ENCODE measurements at regions of chr1 and their contacts with region 1.

Region 1: DNA sequence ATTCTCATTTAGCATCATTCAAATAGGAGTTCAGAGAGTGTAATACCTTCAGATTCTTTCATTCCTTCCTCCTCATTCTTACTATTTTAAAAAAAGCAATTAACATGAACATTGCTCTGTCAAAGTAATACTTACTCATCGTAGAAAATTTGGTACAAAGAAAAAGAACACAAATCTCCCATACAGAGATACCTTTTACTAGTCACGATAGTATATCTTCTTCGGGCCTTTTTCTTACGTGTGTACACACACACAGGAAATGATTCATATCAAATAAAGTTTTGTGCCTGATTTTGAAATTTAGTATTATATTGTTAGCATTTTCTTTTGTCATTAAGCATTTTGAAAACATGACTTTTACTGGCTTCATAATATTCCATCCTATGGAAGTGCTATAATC is 52.9 kb downstream of the NCF2 start:
- DNase-seq: no peak
- ATAC-seq: no peak
- H3K4me3 ChIP-seq: no peak overlapping the region
- H3K27ac ChIP-seq: no peak overlapping the region
- H3K4me1 ChIP-seq: peaks cover 4% of the 10 kb centered on the region
- H3K27me3 ChIP-seq: no peaks in the 10 kb centered on the region
- CTCF ChIP-seq: no peak

Region 2: GRCh38 chr1:182869241-182869666 is 668.2 kb before region 1 on chr1:
- intact Hi-C with region 1: loop called (anchors 10 kb)
- DNase-seq: no peak
- ATAC-seq: peak in 2 of 4 donors; percentile 19 to 22
- H3K4me3 ChIP-seq: no peak overlapping the region
- H3K27ac ChIP-seq: no peak overlapping the region
- H3K4me1 ChIP-seq: no peaks in the 10 kb centered on the region
- H3K27me3 ChIP-seq: no peaks in the 10 kb centered on the region
- CTCF ChIP-seq: no peak

Region 3: DNA sequence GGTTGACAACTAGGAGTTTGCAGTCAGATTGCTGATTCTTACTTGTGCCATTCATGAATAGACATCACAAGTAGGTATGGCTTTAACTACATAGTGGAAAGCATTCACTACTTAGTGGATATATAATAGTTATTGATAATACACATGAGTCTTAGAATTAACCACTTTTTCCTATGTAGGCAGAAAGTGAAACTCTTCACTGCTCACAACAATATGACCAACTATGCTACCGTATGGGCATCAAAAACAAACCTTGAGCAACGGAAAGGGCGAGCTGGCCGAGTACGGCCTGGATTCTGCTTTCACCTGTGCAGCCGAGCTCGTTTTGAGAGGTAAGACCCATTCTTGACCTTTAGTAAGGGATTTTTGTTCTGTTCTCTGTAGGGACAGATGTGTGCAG is 659.6 kb before region 1 on chr1:
- intact Hi-C with region 1: loop called in 1 of 2 experiments (anchors 10 kb)
- DNase-seq: no peak
- ATAC-seq: no peak
- H3K4me3 ChIP-seq: no peak overlapping the region
- H3K27ac ChIP-seq: no peak overlapping the region
- H3K4me1 ChIP-seq: no peaks in the 10 kb centered on the region
- H3K27me3 ChIP-seq: no peaks in the 10 kb centered on the region
- CTCF ChIP-seq: no peak

Region 4: GRCh38 chr1:183454390-183454789 is 83.0 kb before region 1 on chr1:
- intact Hi-C with region 1: no loop called
- DNase-seq: no peak
- ATAC-seq: no peak
- H3K4me3 ChIP-seq: no peak overlapping the region
- H3K27ac ChIP-seq: no peak overlapping the region
- H3K4me1 ChIP-seq: no peaks in the 10 kb centered on the region
- H3K27me3 ChIP-seq: peaks cover 0 to 4% (median 2%) of the 10 kb centered on the region in 3 donors
- CTCF ChIP-seq: no peak

Region 5: DNA sequence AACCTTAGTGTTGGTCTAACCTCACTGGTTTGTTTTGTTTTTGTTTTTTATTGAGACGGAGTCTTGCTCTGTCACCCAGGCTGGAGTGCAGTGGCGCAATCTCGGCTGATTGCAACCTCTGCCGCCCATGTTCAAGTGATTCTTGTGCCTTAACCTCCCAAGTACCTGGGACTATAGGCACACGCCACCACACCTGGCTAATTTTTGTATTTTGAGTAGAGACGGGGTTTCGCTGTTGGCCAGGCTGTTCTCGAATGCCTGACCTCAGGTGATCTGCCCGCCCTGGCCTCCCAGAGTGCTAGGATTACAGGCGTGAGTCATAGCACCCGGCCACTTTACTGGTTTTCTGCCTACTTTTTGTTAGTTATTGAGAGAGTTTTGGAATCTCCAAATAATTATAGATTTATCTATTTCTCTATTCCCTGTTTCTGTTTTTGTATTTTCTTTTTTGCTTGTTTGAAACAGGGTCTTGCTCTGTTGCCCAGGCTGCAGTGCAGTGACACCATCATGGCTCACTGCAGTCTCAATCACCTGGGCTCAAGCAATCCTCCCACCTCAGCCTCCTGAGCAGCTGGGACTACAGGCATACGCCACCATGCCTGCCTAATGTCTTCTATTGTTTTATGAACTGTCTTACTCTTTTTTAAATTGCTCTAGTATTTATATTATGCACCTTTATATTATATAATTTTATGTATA is 43.7 kb before region 1 on chr1:
- intact Hi-C with region 1: no loop called
- DNase-seq: no peak
- ATAC-seq: peak in 2 of 4 donors; percentile 47 to 58
- H3K4me3 ChIP-seq: no peak overlapping the region
- H3K27ac ChIP-seq: no peak overlapping the region
- H3K4me1 ChIP-seq: peaks cover 25% of the 10 kb centered on the region
- H3K27me3 ChIP-seq: no peaks in the 10 kb centered on the region
- CTCF ChIP-seq: no peak

Region 6: DNA sequence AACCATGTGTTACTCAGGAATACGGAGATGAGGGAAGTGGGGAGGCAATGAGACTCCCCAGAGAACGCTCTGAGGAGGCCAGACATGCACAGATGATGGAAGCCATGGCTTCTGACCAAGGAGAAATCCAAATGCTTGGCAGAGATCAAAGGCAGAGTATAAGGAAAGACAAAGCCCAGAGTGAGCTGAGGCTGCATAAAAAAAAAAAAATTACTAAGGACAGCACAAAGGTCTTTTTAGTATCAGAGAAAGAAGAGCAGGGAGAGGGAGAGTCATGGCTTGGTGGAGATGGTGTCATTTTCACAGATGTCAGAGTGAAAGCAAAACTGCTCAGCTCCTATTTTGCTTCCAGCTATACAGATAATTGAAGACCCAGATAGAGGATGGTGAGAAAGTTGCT is 61.0 kb after region 1 on chr1:
- intact Hi-C with region 1: no loop called
- DNase-seq: no peak
- ATAC-seq: no peak
- H3K4me3 ChIP-seq: no peak overlapping the region
- H3K27ac ChIP-seq: peak overlapping the region; percentile 16
- H3K4me1 ChIP-seq: no peaks in the 10 kb centered on the region
- H3K27me3 ChIP-seq: peaks cover 0 to 3% (median 0%) of the 10 kb centered on the region in 3 donors
- CTCF ChIP-seq: no peak

Region 7: DNA sequence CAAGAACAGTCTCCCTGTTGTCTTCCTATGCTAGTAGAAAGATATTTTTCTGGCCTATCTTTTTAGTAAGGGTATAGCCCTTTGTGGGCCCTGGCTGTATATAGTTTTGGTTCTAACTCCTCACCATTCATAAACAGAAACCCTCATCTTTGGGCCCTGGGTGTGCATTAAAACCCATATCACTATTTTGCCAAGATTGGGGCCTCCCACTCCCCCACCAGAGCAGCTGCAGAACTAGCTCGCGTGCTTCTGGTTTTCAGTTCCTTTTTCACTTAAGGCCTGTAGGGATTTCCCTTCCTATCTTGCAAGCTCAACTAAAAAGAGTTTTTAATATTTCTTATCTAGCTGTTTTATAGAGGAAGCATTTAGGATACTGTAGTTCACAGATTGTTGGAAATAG is 373.9 kb after region 1 on chr1:
- intact Hi-C with region 1: no loop called
- DNase-seq: no peak
- ATAC-seq: no peak
- H3K4me3 ChIP-seq: no peak overlapping the region
- H3K27ac ChIP-seq: no peak overlapping the region
- H3K4me1 ChIP-seq: peaks cover 6% of the 10 kb centered on the region
- H3K27me3 ChIP-seq: no peaks in the 10 kb centered on the region
- CTCF ChIP-seq: no peak